ENCODE measurements at regions of chr17 and their contacts with region 1.

Region 1: GRCh38 chr17:42760652-42761581 is at the start of gene RAMP2:
- DNase-seq: peak in 1 of 3 donors; percentile 36
- ATAC-seq: peak; percentile 15 to 57 (median 22)
- H3K4me3 ChIP-seq: peak within 1 kb of the TSS; percentile 32 to 47 (median 38)
- H3K27ac ChIP-seq: peak within 1 kb of the TSS; percentile 18 to 59 (median 21)
- H3K4me1 ChIP-seq: peaks cover 0 to 15% (median 0%) of the 10 kb centered on the region in 4 donors
- H3K27me3 ChIP-seq: no peaks in the 10 kb centered on the region
- CTCF ChIP-seq: no peak
- POLR2A ChIP-seq: no peak
- total RNA-seq, gene RAMP2: 1.9 to 9.4 (median 4.4) TPM

Region 2: GRCh38 chr17:42720996-42721583 is 39.8 kb before region 1 on chr17:
- intact Hi-C with region 1: loop called (anchors 5 to 10 kb)
- DNase-seq: no peak
- ATAC-seq: peak; percentile 79 to 94 (median 82)
- H3K4me3 ChIP-seq: no peak overlapping the region
- H3K27ac ChIP-seq: no peak overlapping the region
- H3K4me1 ChIP-seq: no peaks in the 10 kb centered on the region
- H3K27me3 ChIP-seq: no peaks in the 10 kb centered on the region
- CTCF ChIP-seq: peak; percentile 59 to 75 (median 70)
- POLR2A ChIP-seq: no peak

Measured in right lobe of liver (tissue), 6 donors.